H1 (cell line): ENCODE measurements at regions of chr13 and their contacts with region 1.

Region 1: DNA sequence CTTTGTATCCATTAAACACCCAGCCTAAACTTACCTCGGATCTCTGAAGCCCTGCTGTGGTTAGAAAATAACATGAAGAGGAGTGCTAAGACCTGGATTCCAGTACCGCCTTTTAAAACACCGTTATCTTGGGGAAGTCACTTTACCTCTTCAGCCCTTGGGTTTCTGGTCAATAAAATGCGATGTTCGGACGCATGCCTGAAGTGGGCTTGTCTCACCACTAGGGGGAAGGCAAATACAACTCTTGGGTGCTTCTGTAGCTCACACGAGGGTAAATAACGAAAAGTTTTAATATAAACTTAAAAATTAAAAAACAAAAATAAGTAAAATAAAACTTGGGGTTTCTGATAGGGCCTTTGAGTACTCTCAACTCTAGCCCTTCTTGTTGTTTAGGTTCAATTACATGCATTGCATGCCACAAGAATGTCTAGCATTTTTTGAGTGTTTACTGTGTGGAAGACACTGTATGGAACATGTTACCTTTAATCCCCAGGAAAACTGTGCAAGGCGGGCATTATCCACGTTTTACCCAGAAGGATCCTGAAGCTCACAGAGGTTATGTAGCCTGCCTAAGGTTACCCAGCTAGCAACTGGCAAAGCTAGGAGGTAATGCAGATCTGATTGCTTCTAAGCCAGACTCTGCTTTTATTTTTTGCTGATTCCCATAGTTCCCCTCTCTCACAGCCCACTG is 240.4 kb downstream of the LMO7 start:
- DNase-seq: peak; percentile 27 to 70
- H3K4me3 ChIP-seq: no peak overlapping the region
- H3K27ac ChIP-seq: no peak overlapping the region
- H3K4me1 ChIP-seq: peaks cover 0 to 13% (median 2%) of the 10 kb centered on the region in 4 experiments; a peak in 3 of 7 replicates
- H3K27me3 ChIP-seq: no peaks in the 10 kb centered on the region
- CTCF ChIP-seq: peak; percentile 70 to 86 (median 82)
- EP300 ChIP-seq: no peak
- POLR2A ChIP-seq: no peak
- RAD21 ChIP-seq: peak; percentile 92 to 94

Region 2: DNA sequence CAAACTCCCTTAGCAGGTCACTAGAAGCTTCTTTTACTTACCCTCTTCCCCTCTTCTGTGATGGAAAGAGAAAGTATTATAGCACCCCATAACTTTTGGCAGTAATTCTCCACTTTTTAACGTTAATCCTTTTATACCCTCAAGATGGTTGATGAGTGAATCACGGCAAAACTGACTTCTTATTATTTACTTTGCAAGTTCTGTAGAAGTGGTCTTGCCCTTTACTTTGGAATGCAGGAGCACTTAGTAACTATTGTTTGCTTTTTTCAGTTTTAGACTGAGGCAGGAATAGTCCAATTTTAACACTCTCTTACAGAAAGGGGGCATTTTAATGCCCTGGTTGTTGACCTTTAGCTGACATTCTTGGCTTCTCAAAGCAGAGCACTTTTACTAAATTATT is 19.8 kb after region 1 on chr13:
- CTCF ChIA-PET with region 1: interaction called, 47 read pairs
- POLR2A ChIA-PET with region 1: no interaction called
- DNase-seq: no peak
- H3K4me3 ChIP-seq: no peak overlapping the region
- H3K27ac ChIP-seq: no peak overlapping the region
- H3K4me1 ChIP-seq: peaks cover 0 to 4% (median 3%) of the 10 kb centered on the region in 4 experiments; a peak in 3 of 7 replicates
- H3K27me3 ChIP-seq: no peaks in the 10 kb centered on the region
- CTCF ChIP-seq: no peak
- EP300 ChIP-seq: no peak
- POLR2A ChIP-seq: no peak
- RAD21 ChIP-seq: no peak

Region 3: GRCh38 chr13:75908141-75908540 is 31.6 kb after region 1 on chr13:
- CTCF ChIA-PET with region 1: interaction called, 31 read pairs
- POLR2A ChIA-PET with region 1: no interaction called
- DNase-seq: no peak
- H3K4me3 ChIP-seq: no peak overlapping the region
- H3K27ac ChIP-seq: no peak overlapping the region
- H3K4me1 ChIP-seq: no peaks in the 10 kb centered on the region
- H3K27me3 ChIP-seq: no peaks in the 10 kb centered on the region
- CTCF ChIP-seq: no peak
- EP300 ChIP-seq: no peak
- POLR2A ChIP-seq: no peak
- RAD21 ChIP-seq: no peak

Region 4: GRCh38 chr13:76473552-76474134 is 597.1 kb after region 1 on chr13:
- CTCF ChIA-PET with region 1: interaction called, 37 read pairs
- POLR2A ChIA-PET with region 1: no interaction called
- DNase-seq: peak; percentile 51 to 81
- H3K4me3 ChIP-seq: no peak overlapping the region
- H3K27ac ChIP-seq: no peak overlapping the region
- H3K4me1 ChIP-seq: no peaks in the 10 kb centered on the region
- H3K27me3 ChIP-seq: no peaks in the 10 kb centered on the region
- CTCF ChIP-seq: peak; percentile 37 to 99 (median 82)
- EP300 ChIP-seq: no peak
- POLR2A ChIP-seq: no peak
- RAD21 ChIP-seq: peak; percentile 97 to 99